Transverse colon (tissue), 4 donors: ENCODE measurements at regions of chr6 and their contacts with region 1.

Region 1: DNA sequence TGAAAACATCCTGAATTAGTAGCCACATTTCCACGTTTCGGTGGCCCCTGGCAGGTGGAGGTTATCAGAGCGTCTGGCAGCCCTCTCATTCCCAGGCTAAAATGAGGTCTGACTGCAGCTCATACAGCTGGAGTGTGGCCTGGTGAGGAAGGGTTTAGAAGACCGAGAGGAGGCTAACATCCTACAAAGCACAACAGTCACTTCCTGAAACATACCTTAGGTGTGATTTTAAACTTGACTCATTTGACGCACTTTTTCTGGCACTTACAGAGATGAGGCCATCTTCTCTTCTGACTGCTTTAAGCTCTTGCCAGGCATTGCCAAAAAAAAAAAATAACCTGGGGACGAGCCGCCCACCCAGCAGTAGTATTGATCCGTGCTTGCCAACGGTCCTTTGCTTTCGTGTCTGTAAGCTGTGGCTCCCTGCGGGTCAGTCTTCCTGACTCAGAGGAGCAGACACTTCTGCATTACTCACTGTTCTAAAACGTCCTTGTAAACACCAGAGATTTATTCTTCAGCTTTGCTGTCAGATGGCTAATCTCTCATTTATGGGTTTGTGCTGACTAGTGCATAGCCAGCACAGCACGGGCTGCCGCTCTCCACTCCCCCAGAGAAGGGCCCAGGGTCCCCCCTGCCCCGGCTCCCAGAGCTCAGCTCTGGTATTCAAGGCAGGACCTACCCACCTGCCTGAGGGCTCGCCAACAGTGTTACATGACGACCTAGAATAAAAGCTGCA is 78.4 kb upstream of the FRMD1 start:
- DNase-seq: no peak
- H3K4me3 ChIP-seq: no peak overlapping the region
- H3K27ac ChIP-seq: peak overlapping the region; percentile 54 to 78 (median 64)
- H3K4me1 ChIP-seq: peaks cover 10 to 63% (median 28%) of the 10 kb centered on the region in 4 donors
- H3K27me3 ChIP-seq: no peaks in the 10 kb centered on the region
- CTCF ChIP-seq: no peak
- EP300 ChIP-seq: peak; percentile 68
- POLR2A ChIP-seq: no peak

Region 2: DNA sequence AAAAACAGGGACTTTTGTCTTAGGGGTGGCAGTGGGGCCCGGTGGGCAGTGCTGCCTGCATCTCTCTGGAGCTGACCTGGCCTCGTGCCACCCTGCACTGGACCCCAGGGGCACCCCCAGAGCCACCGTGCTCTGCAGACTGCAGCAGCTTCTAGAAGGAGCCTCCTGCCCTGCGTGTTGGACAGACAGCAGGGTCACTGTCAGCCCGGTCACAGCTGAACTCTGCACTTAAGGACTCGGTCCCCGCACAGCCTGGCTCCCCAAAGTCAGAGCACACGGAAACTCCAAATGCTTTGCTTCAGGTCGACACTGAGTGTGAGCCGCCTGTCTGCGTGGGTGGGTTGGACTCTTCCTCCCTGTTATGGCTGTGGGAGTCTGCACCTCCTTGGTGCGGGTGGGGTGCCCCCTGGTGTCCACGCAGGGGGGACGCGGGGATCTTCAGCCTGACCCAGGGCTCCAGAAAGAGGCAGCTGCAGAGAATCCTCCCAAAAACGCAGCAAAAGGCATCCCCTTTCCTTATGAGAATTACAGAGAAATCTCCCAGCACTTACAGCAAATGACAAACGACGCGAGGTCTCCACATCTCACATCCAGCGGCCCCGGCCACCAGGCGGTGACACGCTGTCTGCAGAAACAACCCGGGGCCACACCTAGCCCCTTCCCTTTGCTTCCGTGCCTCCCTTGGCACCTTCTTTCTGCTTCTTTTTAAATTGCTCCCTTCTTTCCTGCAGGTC is 198.4 kb after region 1 on chr6:
- in situ Hi-C with region 1: loop called in 2 of 4 experiments (anchors 10 kb)
- intact Hi-C with region 1: no loop called
- DNase-seq: peak; percentile 68
- H3K4me3 ChIP-seq: peak overlapping the region in 1 of 4 donors; percentile 15
- H3K27ac ChIP-seq: no peak overlapping the region
- H3K4me1 ChIP-seq: peaks cover 0 to 8% (median 0%) of the 10 kb centered on the region in 4 donors
- H3K27me3 ChIP-seq: no peaks in the 10 kb centered on the region
- CTCF ChIP-seq: peak; percentile 65 to 91 (median 79)
- EP300 ChIP-seq: no peak
- POLR2A ChIP-seq: no peak

Region 3: GRCh38 chr6:168370310-168370991 is 213.0 kb after region 1 on chr6:
- in situ Hi-C with region 1: loop called in 1 of 4 experiments (anchors 10 kb)
- intact Hi-C with region 1: no loop called
- DNase-seq: peak; percentile 85
- H3K4me3 ChIP-seq: no peak overlapping the region
- H3K27ac ChIP-seq: no peak overlapping the region
- H3K4me1 ChIP-seq: peaks cover 0 to 7% (median 5%) of the 10 kb centered on the region in 4 donors
- H3K27me3 ChIP-seq: no peaks in the 10 kb centered on the region
- CTCF ChIP-seq: peak; percentile 87 to 93 (median 91)
- EP300 ChIP-seq: no peak
- POLR2A ChIP-seq: no peak